ENCODE measurements at regions of chr1 and their contacts with region 1.

Region 1: DNA sequence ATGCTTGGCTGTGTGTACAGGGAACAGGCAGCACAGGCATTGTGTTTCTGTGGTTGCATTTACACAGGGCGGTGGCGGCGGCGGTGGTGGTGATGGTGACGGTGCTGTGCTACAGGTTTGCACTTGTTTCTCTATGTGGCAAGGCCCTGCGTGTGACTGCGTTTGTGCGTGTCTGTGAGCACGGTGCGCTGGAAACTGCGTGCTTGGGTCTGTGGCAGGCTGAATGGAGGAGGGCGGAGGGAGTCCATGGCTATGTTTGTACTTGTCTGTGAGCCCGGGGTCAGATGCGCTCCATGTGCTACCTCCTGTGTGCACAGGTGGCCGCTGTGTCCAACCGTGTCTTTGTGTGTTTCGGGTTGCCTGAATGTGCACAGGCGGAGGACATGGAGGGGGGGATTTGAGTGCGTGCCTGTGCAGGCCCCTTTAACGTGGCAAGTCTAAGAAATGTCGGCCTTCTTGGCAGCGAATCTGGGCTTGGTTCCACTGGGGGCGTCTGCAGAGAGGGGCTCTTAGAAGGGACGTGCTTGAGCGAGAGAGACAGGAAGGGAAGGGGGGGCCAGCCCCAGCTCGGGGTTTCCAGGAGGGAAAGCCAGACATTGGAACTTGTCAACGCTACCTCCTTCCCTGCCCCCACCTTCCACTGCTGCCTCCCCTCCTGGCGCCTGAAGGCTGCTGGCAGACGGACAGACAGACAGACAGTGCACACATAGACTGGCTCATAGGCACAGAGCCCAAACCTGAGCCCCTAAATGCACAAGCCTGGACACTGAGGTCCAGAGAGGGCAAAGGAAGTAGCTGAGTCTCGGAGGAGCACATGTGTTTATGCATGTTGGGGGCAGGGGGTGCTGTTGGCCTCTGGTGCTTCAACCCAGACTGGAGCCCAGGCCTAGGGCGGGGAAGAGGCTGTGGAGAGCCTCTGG is 32.7 kb upstream of the WASF2 start:
- DNase-seq: peak; percentile 35
- ATAC-seq: peak; percentile 64
- H3K4me3 ChIP-seq: peak overlapping the region; percentile 25; the same call in 1 of the 2 replicates
- H3K27ac ChIP-seq: peak overlapping the region; percentile 48
- H3K4me1 ChIP-seq: peaks cover 29% of the 10 kb centered on the region
- H3K27me3 ChIP-seq: no peaks in the 10 kb centered on the region
- CTCF ChIP-seq: peak; percentile 35; the same call in 1 of the 2 replicates

Region 2: GRCh38 chr1:27568300-27569087 is 45.8 kb after region 1 on chr1:
- CTCF ChIA-PET with region 1: no interaction called
- POLR2A ChIA-PET with region 1: no interaction called
- intact Hi-C with region 1: loop called (anchors 5 kb)
- DNase-seq: peak; percentile 97
- ATAC-seq: peak; percentile 86
- H3K4me3 ChIP-seq: peak overlapping the region; percentile 52; the same call in 1 of the 2 replicates
- H3K27ac ChIP-seq: peak overlapping the region; percentile 39
- H3K4me1 ChIP-seq: peaks cover 30% of the 10 kb centered on the region
- H3K27me3 ChIP-seq: no peaks in the 10 kb centered on the region
- CTCF ChIP-seq: peak; percentile 78